PC-9 (cell line): ENCODE measurements at regions of chr5 and their contacts with region 1.

Region 1: DNA sequence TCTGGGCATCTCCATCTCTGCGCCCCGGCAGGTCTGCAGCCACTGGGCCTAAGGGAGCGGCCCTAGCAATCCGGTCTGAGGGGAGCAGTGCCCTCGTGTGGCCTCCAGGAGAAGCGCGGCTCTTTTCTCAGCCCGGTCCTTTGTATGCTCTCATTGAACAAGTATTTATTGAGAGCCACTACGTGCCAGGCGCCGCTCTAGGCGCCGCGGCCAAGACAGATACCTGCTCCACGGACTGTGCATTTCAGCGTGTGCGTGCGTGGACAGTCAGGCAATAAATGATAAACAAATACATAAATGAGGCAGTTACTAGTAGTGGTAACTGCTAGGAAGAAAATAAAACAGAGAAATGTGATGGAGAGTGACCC is 2.3 kb upstream of the SLC4A9 start:
- DNase-seq: peak; percentile 72 to 78
- H3K4me3 ChIP-seq: peak overlapping the region; percentile 24; the same call in 1 of the 2 replicates
- H3K27ac ChIP-seq: no peak overlapping the region
- H3K4me1 ChIP-seq: no peaks in the 10 kb centered on the region
- H3K27me3 ChIP-seq: no peaks in the 10 kb centered on the region
- CTCF ChIP-seq: peak; percentile 89

Region 2: DNA sequence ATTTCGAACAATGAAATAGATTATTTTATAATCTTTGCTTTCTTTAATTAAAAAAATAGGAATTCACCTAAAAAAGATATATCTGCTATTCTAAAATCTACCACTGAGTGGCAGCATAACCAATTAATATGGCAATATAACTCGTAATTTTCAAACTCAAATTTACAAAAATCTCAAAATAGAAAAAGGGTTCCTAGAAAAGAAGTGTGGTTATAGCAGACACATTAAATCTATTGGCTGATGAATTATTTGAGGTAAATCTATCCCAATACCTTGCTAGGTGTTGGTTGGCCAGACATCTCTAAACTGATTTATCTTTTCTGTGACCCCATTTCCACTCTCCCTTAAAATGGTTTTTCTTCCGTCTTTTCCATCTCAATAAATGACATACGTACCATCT is 284.4 kb before region 1 on chr5:
- CTCF ChIA-PET with region 1: interaction called, 3 read pairs
- POLR2A ChIA-PET with region 1: no interaction called
- intact Hi-C with region 1: loop called (anchors 2 kb)
- DNase-seq: no peak
- H3K4me3 ChIP-seq: no peak overlapping the region
- H3K27ac ChIP-seq: no peak overlapping the region
- H3K4me1 ChIP-seq: no peaks in the 10 kb centered on the region
- H3K27me3 ChIP-seq: no peaks in the 10 kb centered on the region
- CTCF ChIP-seq: peak; percentile 82

Region 3: DNA sequence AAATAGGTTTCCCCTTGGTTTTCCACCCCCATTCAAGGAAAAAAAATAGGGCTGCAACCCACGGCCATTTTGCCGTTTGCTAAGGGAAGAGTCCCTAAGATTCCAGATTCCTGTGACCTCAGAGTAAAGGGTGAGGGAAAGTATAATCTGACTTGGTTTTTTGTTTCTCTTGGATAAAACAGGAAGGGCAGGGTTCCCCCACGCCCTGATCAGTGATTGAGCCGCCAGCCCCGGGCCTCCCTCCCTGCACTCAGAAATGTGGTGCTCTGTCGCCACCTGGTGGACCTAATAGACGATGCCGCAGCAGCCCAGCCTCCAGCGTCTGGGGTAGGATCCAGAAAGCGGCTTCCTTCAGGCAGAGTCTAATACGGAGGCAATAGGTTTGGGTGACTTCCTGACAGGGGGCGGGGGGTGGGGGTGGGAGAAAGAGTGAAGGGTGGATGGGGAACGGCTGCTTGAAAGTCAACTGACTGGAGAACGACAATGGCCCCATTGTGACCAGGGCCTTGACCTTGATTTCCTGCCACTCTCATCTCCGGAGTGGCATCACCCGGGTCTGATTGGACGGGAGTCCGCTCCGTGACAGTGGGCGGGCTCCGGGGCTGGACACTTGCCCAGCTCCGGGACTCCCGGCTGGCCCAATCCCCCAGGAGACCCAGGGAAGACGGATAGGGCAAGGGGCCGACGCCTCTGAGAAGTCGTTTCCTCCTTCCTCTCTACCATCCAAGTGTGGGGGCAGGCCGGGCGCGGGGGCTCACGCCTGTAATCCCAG is 200.5 kb before region 1 on chr5:
- CTCF ChIA-PET with region 1: no interaction called
- POLR2A ChIA-PET with region 1: no interaction called
- intact Hi-C with region 1: loop called (anchors 5 kb)
- DNase-seq: peak; percentile 58 to 80
- H3K4me3 ChIP-seq: no peak overlapping the region
- H3K27ac ChIP-seq: no peak overlapping the region
- H3K4me1 ChIP-seq: peaks cover 4% of the 10 kb centered on the region
- H3K27me3 ChIP-seq: no peaks in the 10 kb centered on the region
- CTCF ChIP-seq: peak; percentile 95

Region 4: GRCh38 chr5:140174465-140175366 is 183.0 kb before region 1 on chr5 and contains the start of gene CYSTM1:
- CTCF ChIA-PET with region 1: interaction called, 4 read pairs
- POLR2A ChIA-PET with region 1: interaction called, 3 read pairs
- intact Hi-C with region 1: loop called (anchors 5 kb)
- DNase-seq: peak; percentile 83 to 97
- H3K4me3 ChIP-seq: peak within 1 kb of the TSS; percentile 99
- H3K27ac ChIP-seq: peak within 1 kb of the TSS; percentile 51
- H3K4me1 ChIP-seq: peaks cover 22% of the 10 kb centered on the region
- H3K27me3 ChIP-seq: no peaks in the 10 kb centered on the region
- CTCF ChIP-seq: no peak
- total RNA-seq, gene CYSTM1: 27.2 and 29.8 TPM in 2 replicates

Region 5: GRCh38 chr5:140244525-140245025 is 113.1 kb before region 1 on chr5:
- CTCF ChIA-PET with region 1: interaction called, 31 read pairs
- POLR2A ChIA-PET with region 1: interaction called, 7 read pairs
- intact Hi-C with region 1: loop called (anchors 1 kb)
- DNase-seq: peak; percentile 77 to 82
- H3K4me3 ChIP-seq: no peak overlapping the region
- H3K27ac ChIP-seq: no peak overlapping the region
- H3K4me1 ChIP-seq: peaks cover 45% of the 10 kb centered on the region
- H3K27me3 ChIP-seq: no peaks in the 10 kb centered on the region
- CTCF ChIP-seq: peak; percentile 91

Region 6: GRCh38 chr5:140381972-140382371 is 24.3 kb after region 1 on chr5:
- CTCF ChIA-PET with region 1: no interaction called
- POLR2A ChIA-PET with region 1: no interaction called
- intact Hi-C with region 1: no loop called
- DNase-seq: no peak
- H3K4me3 ChIP-seq: no peak overlapping the region
- H3K27ac ChIP-seq: no peak overlapping the region
- H3K4me1 ChIP-seq: no peaks in the 10 kb centered on the region
- H3K27me3 ChIP-seq: no peaks in the 10 kb centered on the region
- CTCF ChIP-seq: no peak

Region 7: GRCh38 chr5:140674629-140675028 is 316.9 kb after region 1 on chr5:
- CTCF ChIA-PET with region 1: no interaction called
- POLR2A ChIA-PET with region 1: interaction called, 22 read pairs
- intact Hi-C with region 1: no loop called
- DNase-seq: no peak
- H3K4me3 ChIP-seq: no peak overlapping the region
- H3K27ac ChIP-seq: no peak overlapping the region
- H3K4me1 ChIP-seq: no peaks in the 10 kb centered on the region
- H3K27me3 ChIP-seq: no peaks in the 10 kb centered on the region
- CTCF ChIP-seq: no peak

Region 8: GRCh38 chr5:140926443-140927227 is 568.9 kb after region 1 on chr5:
- CTCF ChIA-PET with region 1: no interaction called
- POLR2A ChIA-PET with region 1: interaction called, 57 read pairs
- intact Hi-C with region 1: no loop called
- DNase-seq: peak; percentile 49 to 88
- H3K4me3 ChIP-seq: peak overlapping the region; percentile 35; the same call in 1 of the 2 replicates
- H3K27ac ChIP-seq: no peak overlapping the region
- H3K4me1 ChIP-seq: no peaks in the 10 kb centered on the region
- H3K27me3 ChIP-seq: no peaks in the 10 kb centered on the region
- CTCF ChIP-seq: peak; percentile 62

Region 9: DNA sequence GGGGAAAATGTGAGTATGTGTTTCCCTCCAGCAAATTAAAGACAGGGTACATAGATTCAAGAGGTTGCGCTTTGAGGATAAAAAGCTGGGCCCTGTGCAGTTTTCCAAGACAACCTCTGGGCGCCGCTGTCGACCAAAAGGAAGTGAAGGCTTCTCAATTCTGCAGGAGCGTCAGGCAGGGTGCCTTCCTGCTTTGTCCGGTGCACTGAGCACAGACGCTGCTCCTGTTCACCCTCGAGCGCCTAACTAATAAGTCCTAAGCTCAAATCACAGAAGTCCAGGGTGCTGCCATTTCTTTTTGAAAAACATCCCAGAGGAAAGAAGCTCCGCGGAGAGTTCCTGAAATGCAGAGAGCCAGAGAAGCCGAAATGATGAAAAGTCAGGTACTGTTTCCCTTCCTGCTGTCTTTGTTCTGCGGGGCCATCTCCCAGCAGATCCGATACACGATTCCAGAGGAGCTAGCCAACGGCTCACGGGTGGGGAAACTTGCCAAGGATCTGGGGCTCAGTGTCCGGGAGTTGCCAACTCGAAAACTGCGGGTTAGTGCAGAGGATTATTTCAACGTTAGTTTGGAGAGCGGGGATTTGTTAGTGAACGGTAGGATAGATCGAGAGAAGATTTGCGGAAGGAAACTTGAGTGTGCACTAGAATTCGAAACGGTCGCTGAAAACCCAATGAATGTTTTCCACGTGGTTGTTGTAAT is 992.4 kb after region 1 on chr5 and contains the start of gene PCDHGB1:
- CTCF ChIA-PET with region 1: no interaction called
- POLR2A ChIA-PET with region 1: no interaction called
- intact Hi-C with region 1: no loop called
- DNase-seq: peak in 1 of 2 experiments; percentile 33
- H3K4me3 ChIP-seq: no peak within 1 kb of the TSS
- H3K27ac ChIP-seq: no peak within 1 kb of the TSS
- H3K4me1 ChIP-seq: no peaks in the 10 kb centered on the region
- H3K27me3 ChIP-seq: no peaks in the 10 kb centered on the region
- CTCF ChIP-seq: peak; percentile 44
- total RNA-seq, gene PCDHGB1: not detected in 2 replicates